ENCODE measurements at regions of chr11 and their contacts with region 1.

Region 1: DNA sequence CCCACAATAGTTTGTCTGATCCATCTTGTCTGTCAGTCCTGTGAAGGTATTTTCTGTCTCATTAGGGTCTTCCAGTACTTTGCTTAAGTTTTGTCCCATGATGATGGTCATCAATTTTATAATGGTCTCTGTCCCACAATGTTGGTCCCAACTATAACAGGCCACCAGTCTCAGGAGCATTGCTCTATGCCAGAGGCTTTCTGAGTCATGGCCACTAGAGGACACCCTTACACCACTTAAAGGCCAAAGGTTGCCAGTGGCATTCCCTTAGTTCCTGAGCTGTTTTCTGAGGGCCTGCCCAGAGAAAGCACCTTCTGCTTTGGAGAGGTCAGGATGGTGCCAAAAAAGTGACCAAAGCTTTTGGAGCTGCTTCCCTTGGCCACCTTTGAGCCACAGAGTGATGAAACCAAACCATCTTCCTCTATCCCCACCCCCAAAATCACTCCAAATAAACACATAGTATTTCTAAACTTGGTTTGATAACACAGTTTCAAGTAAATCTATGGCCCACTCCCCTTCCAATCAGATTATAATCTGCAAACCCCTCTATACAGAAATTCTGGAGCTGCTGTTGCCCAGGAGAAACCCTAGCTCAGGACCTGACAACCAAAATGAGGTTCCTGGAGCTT is 19.3 kb downstream of the EIF3F start:
- DNase-seq: peak; percentile 77

Region 2: GRCh38 chr11:7927635-7928034 is 78.8 kb before region 1 on chr11:
- CTCF ChIA-PET with region 1: no interaction called
- POLR2A ChIA-PET with region 1: no interaction called
- DNase-seq: no peak

Region 3: GRCh38 chr11:8018484-8019313 is 12.2 kb after region 1 on chr11:
- CTCF ChIA-PET with region 1: interaction called, 25 read pairs
- POLR2A ChIA-PET with region 1: no interaction called
- DNase-seq: peak; percentile 67

Region 4: DNA sequence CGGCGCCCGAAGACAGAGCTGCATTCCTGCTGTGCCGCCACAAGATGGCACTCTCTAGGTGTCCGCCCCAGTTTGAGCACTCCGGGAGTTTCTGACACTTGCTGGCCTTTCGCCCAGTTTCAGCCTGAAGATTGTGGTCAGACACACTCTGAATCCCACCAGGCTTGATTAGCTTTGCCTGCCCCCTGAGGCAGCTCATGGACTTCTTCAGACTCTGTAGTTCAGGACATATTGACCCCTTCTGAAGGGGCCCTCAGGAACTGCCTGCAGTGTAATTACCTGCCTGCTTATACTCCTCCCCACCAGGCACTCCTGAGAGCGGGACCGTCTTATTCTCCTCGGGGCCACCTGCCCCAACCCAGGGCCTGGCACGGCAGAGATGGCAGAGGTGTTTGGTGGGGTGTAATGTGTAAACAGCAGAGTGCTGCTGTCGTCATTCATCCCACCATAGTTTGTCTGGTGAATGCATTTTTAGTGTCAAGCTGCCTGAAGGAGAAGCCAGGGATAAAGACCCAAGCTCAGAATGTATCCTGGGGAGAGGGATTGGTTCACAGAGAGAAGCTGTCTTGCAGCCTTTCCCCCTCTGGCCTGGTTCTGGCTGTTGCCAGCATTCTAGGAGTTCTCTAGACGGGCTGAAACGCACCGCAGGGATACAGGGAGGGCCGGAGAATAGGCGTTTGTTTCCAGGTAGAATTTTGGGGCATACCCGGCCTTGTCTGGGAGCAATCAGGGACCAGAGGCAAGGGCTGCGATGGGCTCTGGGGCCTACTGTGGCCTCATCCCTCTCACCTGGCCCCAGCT is 27.0 kb after region 1 on chr11:
- CTCF ChIA-PET with region 1: interaction called, 10 read pairs
- POLR2A ChIA-PET with region 1: no interaction called
- DNase-seq: peak; percentile 86

Region 5: GRCh38 chr11:8056810-8057463 is 50.5 kb after region 1 on chr11:
- CTCF ChIA-PET with region 1: no interaction called
- POLR2A ChIA-PET with region 1: no interaction called
- DNase-seq: no peak

Region 6: DNA sequence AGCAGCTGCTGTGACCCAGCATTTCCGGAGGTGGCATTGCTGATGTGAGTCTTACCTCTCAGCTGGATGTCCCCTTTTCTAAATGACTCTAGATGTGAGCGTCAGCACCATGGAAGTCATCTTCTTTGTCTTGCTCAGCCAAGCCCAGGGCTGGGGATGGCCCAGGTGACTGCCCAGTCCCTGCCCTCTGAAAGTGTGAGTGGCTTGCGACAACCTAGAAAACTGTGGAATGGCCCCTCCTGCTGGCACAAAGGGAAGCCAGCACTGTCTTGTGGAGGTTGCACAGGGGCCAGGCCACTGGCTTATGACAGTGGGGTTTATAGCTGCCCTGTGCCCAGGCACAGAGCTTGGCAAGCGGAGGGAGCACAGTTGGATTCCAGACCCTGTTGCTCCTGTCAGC is 80.7 kb after region 1 on chr11:
- CTCF ChIA-PET with region 1: interaction called, 25 read pairs
- POLR2A ChIA-PET with region 1: interaction called, 4 read pairs
- DNase-seq: no peak

Region 7: GRCh38 chr11:8092587-8093424 is 86.3 kb after region 1 on chr11:
- CTCF ChIA-PET with region 1: interaction called, 25 read pairs
- POLR2A ChIA-PET with region 1: no interaction called
- DNase-seq: peak; percentile 72

Region 8: GRCh38 chr11:8099291-8099899 is 92.9 kb after region 1 on chr11:
- CTCF ChIA-PET with region 1: interaction called, 34 read pairs
- POLR2A ChIA-PET with region 1: interaction called, 5 read pairs
- DNase-seq: peak; percentile 60

Region 9: GRCh38 chr11:8649361-8649760 is 642.9 kb after region 1 on chr11:
- CTCF ChIA-PET with region 1: no interaction called
- POLR2A ChIA-PET with region 1: no interaction called
- DNase-seq: no peak

Measured in HEK293T (cell line).